ENCODE measurements at regions of chr12 and their contacts with region 1.

Region 1: GRCh38 chr12:18589316-18589715 is 148.5 kb downstream of the PLCZ1 start:
- DNase-seq: no peak
- ATAC-seq: no peak
- H3K4me3 ChIP-seq: no peak overlapping the region
- H3K27ac ChIP-seq: no peak overlapping the region
- H3K4me1 ChIP-seq: no peaks in the 10 kb centered on the region
- H3K27me3 ChIP-seq: no peaks in the 10 kb centered on the region
- CTCF ChIP-seq: no peak
- POLR2A ChIP-seq: no peak

Region 2: DNA sequence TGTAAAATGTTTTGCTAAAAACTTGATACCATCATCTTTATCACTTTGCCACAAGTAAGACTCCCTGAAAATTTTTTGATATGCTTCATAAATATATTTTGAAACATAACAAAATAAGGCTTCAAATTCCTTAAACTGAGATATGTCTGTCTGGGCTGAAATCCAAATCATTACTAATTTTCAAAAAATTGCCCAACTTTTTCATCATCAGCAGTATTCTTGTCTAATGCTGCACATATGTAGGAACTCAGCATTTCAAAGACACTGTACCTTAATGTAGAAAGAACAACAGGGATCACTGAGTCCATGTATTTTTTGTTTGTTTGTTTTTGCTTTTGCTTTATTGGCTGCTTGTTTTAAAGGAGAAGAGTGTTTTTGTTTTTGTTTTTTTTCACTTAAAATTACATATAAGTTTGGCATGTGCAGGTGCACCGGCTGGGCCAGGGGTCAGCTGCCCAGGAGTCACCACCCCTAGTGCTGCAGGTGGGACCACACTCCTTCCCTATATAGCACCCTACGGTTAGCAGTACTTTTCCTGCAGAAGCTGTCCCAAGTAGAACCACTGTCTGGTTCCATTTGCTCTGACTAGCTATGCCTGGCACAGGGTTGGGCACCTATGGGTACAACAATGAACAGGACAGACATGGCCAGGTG is 96.8 kb before region 1 on chr12:
- in situ Hi-C with region 1: loop called in 1 of 4 experiments (anchors 25 kb)
- intact Hi-C with region 1: no loop called
- DNase-seq: no peak
- ATAC-seq: no peak
- H3K4me3 ChIP-seq: no peak overlapping the region
- H3K27ac ChIP-seq: no peak overlapping the region
- H3K4me1 ChIP-seq: no peaks in the 10 kb centered on the region
- H3K27me3 ChIP-seq: no peaks in the 10 kb centered on the region
- CTCF ChIP-seq: no peak
- POLR2A ChIP-seq: no peak